ENCODE measurements at regions of chr19 and their contacts with region 1.

Region 1: DNA sequence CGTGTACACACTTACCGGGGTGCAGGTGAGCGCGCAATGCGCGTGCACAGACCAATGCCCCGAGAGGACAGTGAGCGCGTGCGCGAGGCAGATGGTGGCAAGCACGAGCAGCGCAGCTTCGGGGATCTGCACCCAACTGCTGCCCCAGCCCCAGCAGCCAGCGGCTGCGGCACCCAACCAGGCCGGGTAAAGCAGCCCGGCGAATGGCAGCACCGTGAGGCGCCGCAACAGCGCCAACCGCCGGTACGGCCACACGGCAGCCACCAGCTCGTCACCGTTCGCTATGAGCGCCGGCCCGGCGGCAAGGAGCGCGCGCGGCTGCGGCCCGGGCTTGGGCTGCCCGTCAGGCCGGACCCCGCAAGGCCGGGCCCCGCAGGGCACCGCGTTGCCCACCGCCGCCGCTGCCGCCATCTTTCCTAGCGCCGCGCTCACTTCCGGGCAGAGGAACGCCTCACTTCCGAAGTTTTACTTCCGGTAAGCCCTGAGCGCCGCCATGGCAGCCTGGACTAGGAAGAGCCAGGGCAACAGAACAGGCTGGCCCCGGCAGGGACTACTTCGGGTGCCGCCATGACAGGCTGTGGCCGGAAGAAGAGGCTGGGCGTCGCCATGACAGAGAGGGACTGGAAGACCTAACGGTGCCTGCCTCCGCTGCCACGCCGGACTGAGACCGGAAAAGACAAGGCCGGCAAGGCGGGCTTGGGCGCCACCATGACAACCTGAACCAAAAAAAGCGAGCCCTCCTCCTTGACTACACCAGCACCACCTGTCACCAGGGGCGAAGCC is at the start of gene ATP13A1:
- DNase-seq: peak; percentile 99
- ATAC-seq: peak; percentile 98
- total RNA-seq, gene ATP13A1: 20.1 TPM

Region 2: GRCh38 chr19:19696386-19696785 is 32.9 kb after region 1 on chr19:
- intact Hi-C with region 1: no loop called
- DNase-seq: no peak
- ATAC-seq: no peak

Region 3: DNA sequence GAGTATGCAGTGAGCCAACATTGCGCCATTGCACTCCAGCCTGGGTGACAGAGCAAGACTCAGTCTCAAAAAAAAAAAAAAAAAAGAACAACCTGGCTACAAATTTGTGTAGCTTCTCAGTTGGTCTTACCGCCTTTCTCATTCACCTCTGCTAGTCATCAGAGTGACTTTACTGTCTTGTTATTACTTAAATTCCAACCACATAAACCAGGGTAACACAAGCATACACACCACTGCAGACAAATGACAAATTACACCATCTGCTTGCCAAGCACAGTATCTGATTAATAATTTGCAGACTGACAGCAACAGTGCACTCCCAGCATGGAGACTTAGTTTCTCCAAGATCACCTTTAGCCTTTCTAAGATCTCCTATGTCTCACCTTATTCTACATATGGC is 58.4 kb after region 1 on chr19:
- intact Hi-C with region 1: no loop called
- DNase-seq: no peak
- ATAC-seq: no peak

Region 4: DNA sequence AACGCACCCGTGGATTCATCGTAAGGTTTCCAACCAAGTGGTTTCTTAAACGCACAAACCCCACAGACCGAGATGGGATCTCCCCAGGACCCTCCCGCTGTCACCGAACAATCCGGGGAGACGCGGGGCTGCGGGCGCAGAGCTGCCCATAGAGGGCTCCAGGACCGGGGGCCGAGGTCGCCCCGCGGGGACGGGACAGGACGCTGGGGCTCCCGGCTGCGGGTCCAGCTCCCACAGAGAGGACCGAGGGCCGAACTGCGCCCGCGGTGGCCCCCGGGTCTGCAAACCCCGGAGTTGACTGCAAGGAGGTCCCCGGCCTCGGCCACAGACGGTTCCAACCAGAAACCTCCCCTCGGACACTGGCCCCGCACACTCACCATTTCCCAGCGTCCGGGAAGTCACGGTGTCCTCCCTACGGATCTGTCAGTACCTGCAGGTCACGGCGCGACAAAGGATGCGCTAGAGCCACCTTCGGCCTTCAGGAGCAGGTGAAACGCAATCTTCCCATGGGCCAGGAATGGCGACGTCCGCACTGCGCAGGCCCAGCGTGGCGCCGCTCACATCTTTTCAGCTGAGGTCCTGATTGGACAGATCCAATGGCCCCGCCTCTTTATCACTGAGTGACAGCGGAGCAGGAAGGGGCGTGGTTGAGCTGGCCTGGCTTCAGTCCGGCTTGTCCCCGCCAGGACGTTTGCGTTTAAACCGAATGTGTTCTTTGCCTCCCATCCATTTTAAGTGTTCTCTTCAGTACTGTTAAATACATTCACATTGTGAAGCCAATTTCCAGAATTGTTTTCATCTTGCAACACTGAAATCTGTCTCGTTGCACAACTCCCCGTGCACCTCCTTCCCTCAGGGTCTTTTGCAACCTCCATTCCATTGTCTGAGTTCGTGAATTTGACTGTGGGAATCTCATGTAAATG is 69.4 kb after region 1 on chr19 and contains the start of gene ZNF14:
- intact Hi-C with region 1: loop called (anchors 2 kb)
- DNase-seq: peak; percentile 95
- ATAC-seq: peak; percentile 100
- total RNA-seq, gene ZNF14: 3.6 TPM

Region 5: GRCh38 chr19:19776041-19777008 is 112.9 kb after region 1 on chr19:
- intact Hi-C with region 1: loop called (anchors 1 kb)
- DNase-seq: peak; percentile 99
- ATAC-seq: peak; percentile 100

Region 6: DNA sequence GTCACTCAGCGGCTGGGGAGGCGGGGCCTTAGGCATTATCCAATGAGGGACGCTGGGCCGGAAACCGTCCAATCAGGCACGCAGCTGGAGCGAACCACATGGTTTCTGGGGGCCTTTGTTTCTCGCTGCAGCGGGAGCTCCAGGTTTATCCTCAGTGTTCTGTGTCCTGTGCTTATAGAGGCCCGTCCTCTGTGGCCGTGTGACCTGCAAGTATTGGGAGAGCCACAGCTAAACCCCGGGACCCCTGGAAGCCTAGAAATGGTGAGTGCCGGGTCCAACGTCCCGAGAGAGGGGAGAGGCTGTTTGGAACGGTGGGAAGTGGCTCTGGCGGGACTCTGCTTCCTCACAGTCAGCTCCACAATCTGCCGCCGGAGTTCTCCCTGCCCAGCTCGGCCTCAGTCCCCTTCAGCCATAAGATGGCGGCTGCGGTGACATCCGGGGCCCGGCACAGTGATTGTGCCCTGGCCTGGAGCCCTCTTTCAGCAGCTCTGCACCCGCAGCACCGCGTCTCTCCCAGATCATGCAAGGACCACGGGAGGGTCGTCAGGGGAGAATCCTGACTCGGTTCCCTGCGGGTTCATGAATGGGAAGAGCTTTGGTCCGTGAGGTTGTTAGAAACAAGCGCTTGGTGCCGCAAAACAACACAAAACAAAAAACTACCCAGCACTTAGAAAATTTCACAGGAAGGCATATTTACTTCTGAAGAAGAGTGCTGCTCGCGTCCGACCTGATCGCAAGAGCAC is 202.5 kb after region 1 on chr19 and contains the start of gene ZNF253:
- intact Hi-C with region 1: loop called (anchors 5 kb)
- DNase-seq: peak; percentile 98
- ATAC-seq: peak; percentile 99
- total RNA-seq, gene ZNF253: 11.3 TPM

Measured in Right ventricle myocardium inferior (tissue), 1 donor.